CD4-positive, alpha-beta T cell (primary cell): ENCODE measurements at regions of chr11 and their contacts with region 1.

Region 1: DNA sequence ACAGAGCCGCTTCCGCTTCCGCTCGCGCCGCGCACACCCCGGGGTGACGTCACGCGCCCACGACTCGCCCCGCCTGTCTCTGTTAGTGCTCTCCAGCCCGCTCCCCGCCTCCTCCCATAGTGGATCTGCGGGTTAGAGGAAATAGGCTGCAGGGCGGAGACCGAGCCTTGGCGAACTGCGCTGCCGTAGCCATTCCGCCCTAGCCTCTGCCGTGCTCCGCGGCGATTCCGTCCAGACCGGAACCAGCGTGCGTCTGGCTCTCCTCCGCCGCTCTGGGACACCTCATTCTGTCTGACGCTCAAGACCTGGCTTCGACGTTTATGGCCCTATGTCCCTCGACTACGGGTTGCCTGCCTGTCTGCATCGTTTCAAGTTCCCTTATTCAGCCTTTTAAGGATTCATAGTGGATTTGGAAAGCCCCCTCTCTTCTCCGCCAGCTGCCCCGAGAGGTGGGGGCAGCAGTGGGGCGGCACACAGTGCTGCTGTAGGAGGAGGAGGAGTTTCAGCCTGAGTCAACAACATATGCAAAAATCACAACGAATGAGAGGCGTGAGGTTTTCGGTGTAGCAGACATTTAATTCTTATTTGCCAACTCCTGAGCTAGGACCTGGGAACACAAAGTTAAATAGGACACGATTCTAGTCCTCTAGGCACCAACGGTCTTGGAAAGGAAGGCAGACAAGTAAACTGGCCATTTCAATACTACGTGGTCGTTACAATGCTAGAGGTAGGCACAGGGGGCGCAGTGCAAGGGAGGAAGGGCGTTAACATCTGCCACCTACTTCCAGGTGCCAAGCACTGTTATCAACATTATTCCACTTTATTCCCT is at the start of gene TAF10:
- DNase-seq: peak; percentile 88 to 98 (median 95)
- ATAC-seq: peak; percentile 86
- H3K4me3 ChIP-seq: peak within 1 kb of the TSS; percentile 90
- H3K4me3 Mint-ChIP-seq: peak within 1 kb of the TSS; percentile 92
- H3K27ac ChIP-seq: peak within 1 kb of the TSS; percentile 96 to 98
- H3K27ac Mint-ChIP-seq: no peak within 1 kb of the TSS
- H3K4me1 ChIP-seq: peaks cover 63% of the 10 kb centered on the region
- H3K4me1 Mint-ChIP-seq: peaks cover 35% of the 10 kb centered on the region
- H3K27me3 ChIP-seq: no peaks in the 10 kb centered on the region
- H3K27me3 Mint-ChIP-seq: no peaks in the 10 kb centered on the region
- CTCF ChIP-seq: peak; percentile 47
- total RNA-seq, gene TAF10: 154 to 164 TPM

Region 2: GRCh38 chr11:6419009-6419631 is 193.3 kb before region 1 on chr11 and contains the start of gene APBB1:
- CTCF ChIA-PET with region 1: no interaction called
- POLR2A ChIA-PET with region 1: interaction called, 13 read pairs
- intact Hi-C with region 1: loop called in 1 of 2 experiments (anchors 10 kb)
- DNase-seq: peak; percentile 61 to 91 (median 74)
- ATAC-seq: peak; percentile 68
- H3K4me3 ChIP-seq: peak within 1 kb of the TSS; percentile 70
- H3K4me3 Mint-ChIP-seq: peak within 1 kb of the TSS; percentile 91
- H3K27ac ChIP-seq: peak within 1 kb of the TSS; percentile 49 to 92
- H3K27ac Mint-ChIP-seq: peak within 1 kb of the TSS; percentile 89
- H3K4me1 ChIP-seq: peaks cover 49% of the 10 kb centered on the region
- H3K4me1 Mint-ChIP-seq: peaks cover 10% of the 10 kb centered on the region
- H3K27me3 ChIP-seq: no peaks in the 10 kb centered on the region
- H3K27me3 Mint-ChIP-seq: peaks cover 7% of the 10 kb centered on the region
- CTCF ChIP-seq: no peak
- total RNA-seq, gene APBB1: 182 to 184 TPM

Region 3: GRCh38 chr11:6627762-6628241 is 15.4 kb after region 1 on chr11:
- CTCF ChIA-PET with region 1: no interaction called
- POLR2A ChIA-PET with region 1: interaction called, 15 read pairs
- intact Hi-C with region 1: no loop called
- DNase-seq: peak in 4 of 14 experiments; percentile 19 to 58 (median 53)
- ATAC-seq: no peak
- H3K4me3 ChIP-seq: no peak overlapping the region
- H3K4me3 Mint-ChIP-seq: peak overlapping the region; percentile 0
- H3K27ac ChIP-seq: peak overlapping the region in 1 of 2 donors; percentile 7
- H3K27ac Mint-ChIP-seq: peak overlapping the region; percentile 56
- H3K4me1 ChIP-seq: peaks cover 18% of the 10 kb centered on the region
- H3K4me1 Mint-ChIP-seq: peaks cover 12% of the 10 kb centered on the region
- H3K27me3 ChIP-seq: no peaks in the 10 kb centered on the region
- H3K27me3 Mint-ChIP-seq: no peaks in the 10 kb centered on the region
- CTCF ChIP-seq: no peak

Region 4: GRCh38 chr11:6655020-6655789 is 42.8 kb after region 1 on chr11:
- CTCF ChIA-PET with region 1: no interaction called
- POLR2A ChIA-PET with region 1: interaction called, 40 read pairs
- intact Hi-C with region 1: loop called in 1 of 2 experiments (anchors 2 kb)
- DNase-seq: peak in 7 of 14 experiments; percentile 19 to 67 (median 36)
- ATAC-seq: peak; percentile 61
- H3K4me3 ChIP-seq: peak overlapping the region; percentile 51
- H3K4me3 Mint-ChIP-seq: no peak overlapping the region
- H3K27ac ChIP-seq: peak overlapping the region in 1 of 2 donors; percentile 41
- H3K27ac Mint-ChIP-seq: no peak overlapping the region
- H3K4me1 ChIP-seq: peaks cover 32% of the 10 kb centered on the region
- H3K4me1 Mint-ChIP-seq: peaks cover 12% of the 10 kb centered on the region
- H3K27me3 ChIP-seq: no peaks in the 10 kb centered on the region
- H3K27me3 Mint-ChIP-seq: no peaks in the 10 kb centered on the region
- CTCF ChIP-seq: no peak

Region 5: GRCh38 chr11:6746086-6746618 is 133.7 kb after region 1 on chr11:
- CTCF ChIA-PET with region 1: no interaction called
- POLR2A ChIA-PET with region 1: interaction called, 25 read pairs
- intact Hi-C with region 1: no loop called
- DNase-seq: peak in 13 of 14 experiments; percentile 19 to 84 (median 45)
- ATAC-seq: peak; percentile 81
- H3K4me3 ChIP-seq: peak overlapping the region; percentile 69
- H3K4me3 Mint-ChIP-seq: no peak overlapping the region
- H3K27ac ChIP-seq: peak overlapping the region; percentile 84 to 93
- H3K27ac Mint-ChIP-seq: no peak overlapping the region
- H3K4me1 ChIP-seq: peaks cover 17% of the 10 kb centered on the region
- H3K4me1 Mint-ChIP-seq: peaks cover 40% of the 10 kb centered on the region
- H3K27me3 ChIP-seq: no peaks in the 10 kb centered on the region
- H3K27me3 Mint-ChIP-seq: no peaks in the 10 kb centered on the region
- CTCF ChIP-seq: no peak

Region 6: GRCh38 chr11:6778518-6778917 is 166.1 kb after region 1 on chr11:
- CTCF ChIA-PET with region 1: no interaction called
- POLR2A ChIA-PET with region 1: no interaction called
- intact Hi-C with region 1: no loop called
- DNase-seq: no peak
- ATAC-seq: no peak
- H3K4me3 ChIP-seq: no peak overlapping the region
- H3K4me3 Mint-ChIP-seq: no peak overlapping the region
- H3K27ac ChIP-seq: no peak overlapping the region
- H3K27ac Mint-ChIP-seq: no peak overlapping the region
- H3K4me1 ChIP-seq: no peaks in the 10 kb centered on the region
- H3K4me1 Mint-ChIP-seq: no peaks in the 10 kb centered on the region
- H3K27me3 ChIP-seq: no peaks in the 10 kb centered on the region
- H3K27me3 Mint-ChIP-seq: peaks cover 6% of the 10 kb centered on the region
- CTCF ChIP-seq: no peak